HEK293 (cell line): ENCODE measurements at regions of chr12 and their contacts with region 1.

Region 1: DNA sequence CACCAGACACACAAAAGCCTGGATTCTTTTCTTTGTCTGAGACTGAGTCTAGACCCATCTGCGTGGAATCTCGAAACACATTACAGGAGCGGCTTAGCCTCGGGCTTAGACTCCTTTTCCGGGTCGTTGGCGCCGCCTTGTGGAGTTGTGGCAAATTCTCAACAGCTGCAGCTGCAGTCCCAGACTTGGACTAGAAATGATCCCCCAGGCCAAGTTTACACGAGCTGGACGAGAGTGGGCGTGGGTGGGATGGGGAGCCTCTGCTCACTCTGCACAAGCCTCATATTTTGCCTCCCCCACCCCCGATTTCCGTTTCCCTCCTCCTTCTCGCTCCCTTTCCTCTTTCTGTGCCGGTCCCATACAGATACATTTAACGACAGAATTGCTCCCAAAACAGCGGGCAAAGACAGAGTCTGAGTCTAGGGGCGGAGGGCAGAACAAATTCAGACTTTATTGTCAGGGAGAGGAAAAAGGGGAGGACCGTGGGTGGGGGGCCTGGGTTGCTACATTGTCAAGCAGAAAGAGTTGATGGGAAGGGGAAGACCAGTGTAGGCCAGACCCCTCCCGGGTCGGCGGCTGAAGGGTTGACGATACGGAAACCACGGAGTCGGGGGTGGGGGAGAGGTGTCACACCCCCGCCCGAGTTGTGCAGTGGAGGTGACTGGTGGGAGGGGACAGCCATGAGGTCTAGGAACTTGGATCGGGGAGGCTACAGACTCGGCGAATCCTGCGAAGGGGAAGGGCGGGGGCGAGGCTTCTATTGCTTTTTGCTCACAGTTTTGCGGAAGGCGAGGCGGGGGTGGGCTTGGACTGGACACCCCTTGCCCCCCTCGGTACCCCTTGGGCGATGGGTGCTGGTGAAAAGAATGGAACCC is 4.7 kb upstream of the GPR84 start:
- H3K4me3 ChIP-seq: no peak overlapping the region
- H3K27ac ChIP-seq: no peak overlapping the region
- H3K4me1 ChIP-seq: peaks cover 10% of the 10 kb centered on the region
- CTCF ChIP-seq: peak; percentile 79

Region 2: DNA sequence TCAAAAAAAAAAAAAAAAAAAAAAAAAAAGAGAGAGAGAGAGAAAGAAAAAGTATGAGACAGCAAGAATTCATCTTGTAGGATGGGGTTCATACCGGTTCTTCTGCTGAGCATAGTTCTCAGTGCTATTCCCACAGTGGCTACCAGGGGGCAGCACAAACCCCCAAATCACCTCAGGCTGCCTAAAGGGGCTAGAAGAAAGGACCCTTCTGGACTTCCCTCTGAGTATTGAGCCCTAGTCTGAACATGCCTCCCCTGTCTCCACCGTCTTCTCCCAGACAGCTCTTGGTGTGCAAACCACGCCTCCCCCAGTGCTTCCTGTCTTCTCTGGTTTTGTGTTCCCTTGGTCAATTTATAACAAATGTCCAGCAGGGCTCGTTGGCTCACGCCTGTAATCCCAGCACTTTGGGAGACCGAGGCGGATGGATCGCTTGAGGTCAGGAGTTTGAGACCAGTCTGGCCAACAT is 148.8 kb before region 1 on chr12:
- CTCF ChIA-PET with region 1: interaction called, 53 read pairs
- POLR2A ChIA-PET with region 1: no interaction called
- H3K4me3 ChIP-seq: no peak overlapping the region
- H3K27ac ChIP-seq: no peak overlapping the region
- H3K4me1 ChIP-seq: no peaks in the 10 kb centered on the region; the same call in 1 of the 2 replicates
- CTCF ChIP-seq: peak; percentile 84

Region 3: GRCh38 chr12:54294152-54294952 is 74.6 kb before region 1 on chr12:
- CTCF ChIA-PET with region 1: interaction called, 16 read pairs
- POLR2A ChIA-PET with region 1: interaction called, 4 read pairs
- H3K4me3 ChIP-seq: no peak overlapping the region
- H3K27ac ChIP-seq: no peak overlapping the region
- H3K4me1 ChIP-seq: no peaks in the 10 kb centered on the region
- CTCF ChIP-seq: peak; percentile 69

Region 4: DNA sequence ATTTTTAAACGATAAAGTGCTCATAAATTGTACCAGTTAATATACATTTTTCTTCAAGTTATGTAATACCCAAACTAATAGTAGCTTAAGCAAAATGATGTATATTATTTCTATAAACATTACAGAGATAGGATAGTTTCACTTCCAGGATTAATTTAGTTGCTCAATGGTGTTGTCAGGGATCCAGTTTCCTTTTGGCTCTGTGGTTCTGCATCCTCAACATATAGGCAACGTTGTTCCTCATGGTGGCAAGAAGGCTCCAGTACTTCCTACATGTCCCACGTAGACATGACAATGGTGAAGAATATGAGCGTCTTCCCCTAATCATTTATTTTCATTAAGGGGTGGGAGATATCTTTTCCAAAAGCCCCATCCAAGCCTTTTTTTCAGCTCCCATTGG is 339.9 kb after region 1 on chr12:
- CTCF ChIA-PET with region 1: no interaction called
- POLR2A ChIA-PET with region 1: no interaction called
- H3K4me3 ChIP-seq: no peak overlapping the region
- H3K27ac ChIP-seq: no peak overlapping the region
- H3K4me1 ChIP-seq: no peaks in the 10 kb centered on the region
- CTCF ChIP-seq: no peak